Panc1 (cell line): ENCODE measurements at regions of chr10 and their contacts with region 1.

Region 1: DNA sequence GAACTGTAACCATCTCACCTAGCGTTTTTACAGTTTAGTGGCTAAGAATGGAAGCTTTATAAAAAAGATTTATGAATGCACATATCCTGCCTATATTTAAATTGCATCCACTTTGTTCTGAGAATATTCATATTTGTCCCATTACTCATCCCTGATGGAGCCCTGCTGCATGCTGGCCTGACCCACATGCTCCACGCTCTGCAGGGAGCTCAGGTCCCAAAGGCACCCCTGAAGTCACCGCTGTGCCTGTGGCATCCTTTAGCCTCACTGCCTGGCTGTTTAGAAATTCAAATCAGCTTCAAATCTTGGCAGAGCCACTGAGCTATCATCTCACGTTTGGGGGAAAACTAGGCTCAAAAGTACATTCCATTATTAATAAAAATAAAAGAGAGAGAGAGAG is 24.4 kb downstream of the C10orf90 start:
- DNase-seq: no peak
- ATAC-seq: no peak
- H3K4me3 ChIP-seq: no peak overlapping the region
- H3K27ac ChIP-seq: no peak overlapping the region
- H3K4me1 ChIP-seq: no peaks in the 10 kb centered on the region
- H3K27me3 ChIP-seq: peaks cover 4% of the 10 kb centered on the region; the same call in 1 of the 2 replicates
- CTCF ChIP-seq: no peak

Region 2: GRCh38 chr10:127406018-127406550 is 760.0 kb after region 1 on chr10:
- CTCF ChIA-PET with region 1: no interaction called
- POLR2A ChIA-PET with region 1: interaction called, 15 read pairs
- in situ Hi-C with region 1: no loop called
- intact Hi-C with region 1: no loop called
- DNase-seq: no peak
- ATAC-seq: no peak
- H3K4me3 ChIP-seq: no peak overlapping the region
- H3K27ac ChIP-seq: no peak overlapping the region
- H3K4me1 ChIP-seq: no peaks in the 10 kb centered on the region
- H3K27me3 ChIP-seq: no peaks in the 10 kb centered on the region
- CTCF ChIP-seq: no peak